SK-N-SH (cell line): ENCODE measurements at regions of chr1 and their contacts with region 1.

Region 1: DNA sequence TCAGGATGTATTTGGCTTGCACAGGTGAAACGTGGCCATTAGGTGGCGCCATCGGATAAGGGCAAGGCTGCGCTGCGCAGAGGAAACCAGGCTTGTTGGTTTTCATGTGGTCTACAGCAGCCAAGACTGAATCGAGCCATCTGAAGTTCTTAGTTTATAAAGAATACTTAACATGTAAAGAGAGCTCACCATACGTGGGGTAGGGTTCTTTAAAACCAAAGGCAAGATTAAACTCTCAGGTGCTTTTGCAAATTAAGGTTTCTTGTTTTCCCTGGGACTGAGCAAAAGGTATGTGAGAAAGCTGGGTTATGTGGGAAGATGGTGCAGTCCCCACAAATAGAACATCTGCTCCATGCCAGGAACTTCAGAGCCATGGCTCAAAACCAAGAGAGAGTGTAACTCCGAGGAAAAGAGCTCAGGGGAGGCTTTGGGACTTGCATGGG is 9.3 kb downstream of the MASP2 start:
- DNase-seq: peak; percentile 83
- H3K4me3 ChIP-seq: peak overlapping the region in 1 of 2 experiments; percentile 16; a peak in 1 of 4 replicates
- H3K27ac ChIP-seq: no peak overlapping the region
- H3K4me1 ChIP-seq: no peaks in the 10 kb centered on the region
- H3K27me3 ChIP-seq: no peaks in the 10 kb centered on the region
- CTCF ChIP-seq: peak; percentile 98
- EP300 ChIP-seq: no peak
- RAD21 ChIP-seq: peak; percentile 100

Region 2: GRCh38 chr1:10941891-10942541 is 95.7 kb before region 1 on chr1:
- CTCF ChIA-PET with region 1: interaction called, 12 read pairs
- POLR2A ChIA-PET with region 1: no interaction called
- DNase-seq: peak; percentile 92
- H3K4me3 ChIP-seq: peak overlapping the region in 1 of 2 experiments; percentile 51; a peak in 2 of 4 replicates
- H3K27ac ChIP-seq: no peak overlapping the region
- H3K4me1 ChIP-seq: peaks cover 0 to 55% of the 10 kb centered on the region in 2 experiments; a peak in 3 of 4 replicates
- H3K27me3 ChIP-seq: no peaks in the 10 kb centered on the region
- CTCF ChIP-seq: peak; percentile 88
- EP300 ChIP-seq: no peak
- RAD21 ChIP-seq: peak; percentile 80

Region 3: DNA sequence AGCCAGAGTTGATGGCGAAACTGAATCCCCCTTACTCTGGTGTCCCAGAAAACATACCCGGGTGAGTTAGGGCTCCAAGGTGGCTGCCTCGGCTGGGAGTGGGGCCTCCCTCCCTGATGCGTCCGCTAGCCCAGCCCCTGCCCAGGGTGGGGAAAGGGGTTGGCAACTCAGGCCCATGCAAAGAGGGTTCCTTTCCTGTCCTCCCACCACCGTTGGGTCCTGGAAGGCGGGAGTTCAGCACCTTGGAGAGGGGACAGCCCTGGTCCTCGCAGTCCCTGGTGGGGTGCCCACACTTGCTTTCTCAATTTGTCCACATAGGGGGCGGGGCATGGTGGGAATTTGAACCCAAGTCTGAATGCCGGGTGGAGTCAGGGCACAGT is 16.0 kb after region 1 on chr1:
- CTCF ChIA-PET with region 1: interaction called, 118 read pairs
- POLR2A ChIA-PET with region 1: interaction called, 7 read pairs
- DNase-seq: no peak
- H3K4me3 ChIP-seq: no peak overlapping the region
- H3K27ac ChIP-seq: peak overlapping the region in 1 of 2 experiments; percentile 76; a peak in 2 of 4 replicates
- H3K4me1 ChIP-seq: peaks cover 0 to 21% of the 10 kb centered on the region in 2 experiments; a peak in 1 of 4 replicates
- H3K27me3 ChIP-seq: no peaks in the 10 kb centered on the region
- CTCF ChIP-seq: no peak
- EP300 ChIP-seq: no peak
- RAD21 ChIP-seq: no peak

Region 4: DNA sequence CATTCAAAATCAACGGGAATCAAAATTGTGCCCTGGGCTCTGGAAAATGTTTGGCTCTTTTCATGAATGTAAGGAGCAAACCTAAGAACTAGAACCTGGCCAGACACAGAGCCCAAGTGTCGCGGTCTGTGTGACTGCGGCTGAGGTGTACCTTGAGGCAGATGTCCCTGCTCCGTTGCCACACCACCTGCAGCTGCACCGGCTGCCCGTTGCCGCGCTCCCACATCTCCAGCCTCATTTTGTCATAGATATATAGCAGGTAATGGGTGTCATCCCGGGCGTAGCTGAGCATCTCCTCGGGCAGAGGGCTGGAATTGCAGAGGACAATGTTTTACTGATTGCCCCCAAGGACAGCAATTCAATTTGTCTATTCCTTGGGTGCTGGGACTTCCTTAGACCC is 43.2 kb after region 1 on chr1:
- CTCF ChIA-PET with region 1: interaction called, 19 read pairs
- POLR2A ChIA-PET with region 1: no interaction called
- DNase-seq: no peak
- H3K4me3 ChIP-seq: no peak overlapping the region
- H3K27ac ChIP-seq: no peak overlapping the region
- H3K4me1 ChIP-seq: no peaks in the 10 kb centered on the region
- H3K27me3 ChIP-seq: no peaks in the 10 kb centered on the region
- CTCF ChIP-seq: no peak
- EP300 ChIP-seq: no peak
- RAD21 ChIP-seq: no peak

Region 5: GRCh38 chr1:11147197-11147770 is 109.5 kb after region 1 on chr1:
- CTCF ChIA-PET with region 1: interaction called, 11 read pairs
- POLR2A ChIA-PET with region 1: no interaction called
- DNase-seq: peak; percentile 62
- H3K4me3 ChIP-seq: no peak overlapping the region
- H3K27ac ChIP-seq: peak overlapping the region; percentile 25 to 85; a peak in 3 of 4 replicates
- H3K4me1 ChIP-seq: peaks cover 4 to 29% of the 10 kb centered on the region in 2 experiments; a peak in 2 of 4 replicates
- H3K27me3 ChIP-seq: no peaks in the 10 kb centered on the region
- CTCF ChIP-seq: no peak
- EP300 ChIP-seq: peak in 1 of 2 experiments; percentile 63; a peak in 2 of 4 replicates
- RAD21 ChIP-seq: no peak

Region 6: GRCh38 chr1:11227106-11228077 is 189.6 kb after region 1 on chr1:
- CTCF ChIA-PET with region 1: interaction called, 20 read pairs
- POLR2A ChIA-PET with region 1: no interaction called
- DNase-seq: no peak
- H3K4me3 ChIP-seq: no peak overlapping the region
- H3K27ac ChIP-seq: no peak overlapping the region
- H3K4me1 ChIP-seq: no peaks in the 10 kb centered on the region; a peak in 1 of 4 replicates
- H3K27me3 ChIP-seq: no peaks in the 10 kb centered on the region
- CTCF ChIP-seq: no peak
- EP300 ChIP-seq: no peak
- RAD21 ChIP-seq: no peak

Region 7: GRCh38 chr1:11634365-11635192 is 596.8 kb after region 1 on chr1:
- CTCF ChIA-PET with region 1: interaction called, 18 read pairs
- POLR2A ChIA-PET with region 1: no interaction called
- DNase-seq: no peak
- H3K4me3 ChIP-seq: no peak overlapping the region
- H3K27ac ChIP-seq: no peak overlapping the region
- H3K4me1 ChIP-seq: peaks cover 0 to 12% of the 10 kb centered on the region in 2 experiments; a peak in 1 of 4 replicates
- H3K27me3 ChIP-seq: peaks cover 8% of the 10 kb centered on the region; the same call in 1 of the 2 replicates
- CTCF ChIP-seq: no peak
- EP300 ChIP-seq: no peak
- RAD21 ChIP-seq: no peak